ENCODE measurements at regions of chr10 and their contacts with region 1.

Region 1: DNA sequence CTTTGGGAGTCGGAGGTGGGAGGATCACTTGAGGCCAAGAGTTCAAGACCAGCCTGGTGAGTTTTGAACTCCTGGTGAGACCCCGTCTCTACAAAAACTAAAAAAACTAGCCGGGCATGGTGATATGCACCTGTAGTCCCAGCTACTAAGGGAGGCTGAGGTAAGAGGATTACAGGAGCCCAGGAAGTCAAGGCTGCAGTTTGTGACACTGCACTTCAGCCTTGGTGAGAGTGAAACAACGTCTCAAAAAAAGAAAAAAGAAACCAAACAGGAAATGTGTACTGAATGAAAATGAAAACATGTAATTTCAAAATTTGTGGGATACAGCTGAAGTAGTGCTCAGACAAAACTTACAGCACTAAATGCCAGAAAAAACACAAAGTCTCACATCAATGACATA is 7.6 kb downstream of the ARHGAP12 start:
- DNase-seq: no peak
- H3K4me3 Mint-ChIP-seq: peak overlapping the region; percentile 23
- H3K27ac Mint-ChIP-seq: peak overlapping the region; percentile 61
- H3K4me1 Mint-ChIP-seq: peaks cover 33% of the 10 kb centered on the region
- H3K27me3 Mint-ChIP-seq: peaks cover 1% of the 10 kb centered on the region

Region 2: GRCh38 chr10:31875608-31876007 is 45.4 kb before region 1 on chr10:
- intact Hi-C with region 1: loop called (anchors 5 kb)
- DNase-seq: no peak
- H3K4me3 Mint-ChIP-seq: no peak overlapping the region
- H3K27ac Mint-ChIP-seq: no peak overlapping the region
- H3K4me1 Mint-ChIP-seq: peaks cover 18% of the 10 kb centered on the region
- H3K27me3 Mint-ChIP-seq: peaks cover 1% of the 10 kb centered on the region